Activated CD8-positive, alpha-beta memory T cell treated with anti-CD3 and anti-CD28 coated beads, Interleukin-2, amount 10 ng/mL, durations not matched to agents 7 days and 5 days (primary cell): ENCODE measurements at regions of chr7 and their contacts with region 1.

Region 1: DNA sequence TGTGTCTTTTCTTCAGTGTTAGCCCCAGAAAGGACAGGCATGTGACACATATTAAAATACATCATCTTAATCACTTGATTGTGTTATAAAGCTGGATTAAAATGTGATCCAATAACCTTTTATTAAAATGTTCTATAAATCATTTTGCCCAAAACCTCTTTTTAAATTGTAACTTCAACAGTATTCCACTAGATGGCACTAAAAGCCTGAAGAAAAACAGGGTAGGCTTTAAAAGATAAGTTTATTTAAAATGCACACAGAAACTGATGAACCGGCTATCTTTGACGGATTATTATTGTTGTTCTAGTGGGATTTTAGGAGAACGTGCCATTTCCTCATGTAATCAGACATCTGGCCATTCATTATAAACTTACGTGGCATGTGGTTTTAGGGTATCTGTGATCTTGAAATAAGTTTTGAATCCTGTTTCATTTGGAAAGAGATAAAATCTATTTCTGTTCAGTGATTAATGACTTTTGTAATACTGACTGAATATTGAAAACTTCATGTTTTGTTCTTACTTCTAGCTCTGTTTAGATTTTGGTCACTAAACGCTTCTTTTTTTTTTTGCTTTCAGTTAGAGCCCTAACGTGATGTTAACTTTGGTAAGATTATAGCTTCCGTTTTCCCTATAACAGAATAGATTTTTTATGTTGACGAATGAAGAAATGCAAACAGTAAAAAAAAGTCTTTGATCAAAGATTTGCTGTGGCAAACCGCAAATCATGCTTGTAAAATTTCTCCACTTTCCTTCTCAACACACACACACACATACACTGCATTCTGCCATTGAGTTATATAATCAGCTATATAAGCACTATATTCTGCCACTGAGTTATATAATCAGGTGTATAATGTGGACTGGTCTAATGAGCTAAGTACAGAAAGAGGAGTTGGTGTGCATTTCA is 13.6 kb downstream of the VPS50 start:
- DNase-seq: no peak
- ATAC-seq: no peak
- H3K4me3 Mint-ChIP-seq: peak overlapping the region; percentile 52
- H3K27ac Mint-ChIP-seq: peak overlapping the region; percentile 36
- H3K4me1 Mint-ChIP-seq: peaks cover 6% of the 10 kb centered on the region
- H3K27me3 Mint-ChIP-seq: no peaks in the 10 kb centered on the region

Region 2: GRCh38 chr7:93231799-93232672 is 13.7 kb before region 1 on chr7 and contains the start of gene VPS50:
- CTCF ChIA-PET with region 1: interaction called, 12 read pairs
- DNase-seq: peak; percentile 97
- ATAC-seq: peak; percentile 99
- H3K4me3 Mint-ChIP-seq: peak within 1 kb of the TSS; percentile 86
- H3K27ac Mint-ChIP-seq: peak within 1 kb of the TSS; percentile 77
- H3K4me1 Mint-ChIP-seq: peaks cover 25% of the 10 kb centered on the region
- H3K27me3 Mint-ChIP-seq: no peaks in the 10 kb centered on the region
- total RNA-seq, gene VPS50: 17.8 to 20.8 TPM

Region 3: GRCh38 chr7:93551063-93551904 is 305.5 kb after region 1 on chr7:
- CTCF ChIA-PET with region 1: interaction called, 13 read pairs
- DNase-seq: no peak
- ATAC-seq: no peak
- H3K4me3 Mint-ChIP-seq: no peak overlapping the region
- H3K27ac Mint-ChIP-seq: no peak overlapping the region
- H3K4me1 Mint-ChIP-seq: no peaks in the 10 kb centered on the region
- H3K27me3 Mint-ChIP-seq: peaks cover 13% of the 10 kb centered on the region